ENCODE measurements at regions of chr5 and their contacts with region 1.

Region 1: DNA sequence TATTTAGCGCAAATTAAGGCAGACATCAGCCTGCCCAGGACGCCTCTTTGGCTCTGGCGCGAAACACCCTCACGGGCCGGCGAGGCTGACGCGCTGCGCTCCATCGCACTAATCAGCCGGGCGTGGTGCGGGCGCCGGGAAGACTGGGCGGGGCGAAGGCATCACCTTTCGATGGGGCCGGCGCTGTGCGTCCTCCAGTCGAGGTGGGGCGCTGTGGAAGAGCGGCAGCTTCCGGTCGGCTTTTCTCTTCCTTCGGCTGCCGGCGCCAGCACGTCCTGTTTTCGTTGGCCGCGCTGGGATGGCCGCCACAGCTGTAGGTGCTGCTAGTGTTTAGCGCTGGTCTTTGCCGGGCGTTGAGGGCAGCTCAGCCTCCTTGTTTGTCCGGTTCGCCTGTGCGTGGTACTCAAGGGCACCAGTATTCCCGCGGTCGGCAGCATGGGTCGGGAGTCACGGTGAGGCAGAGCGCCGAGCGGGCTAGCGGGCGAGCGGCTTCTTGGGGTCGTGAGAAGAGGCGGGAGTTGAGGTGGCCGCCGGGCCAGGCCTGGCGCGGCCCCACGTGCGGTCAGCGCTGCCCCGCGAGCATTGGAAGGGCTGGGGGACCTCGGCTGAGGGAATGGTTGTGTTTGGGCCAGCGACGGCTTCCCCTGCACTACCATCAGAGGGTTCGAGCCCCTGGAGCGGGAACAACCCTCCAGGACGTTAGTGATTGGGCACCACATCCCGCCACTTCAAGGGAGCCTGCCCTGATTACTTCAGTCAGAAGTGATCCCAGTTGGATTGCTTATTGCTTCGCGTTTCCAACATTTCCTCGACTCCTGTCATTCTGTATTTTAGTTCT is at the start of gene DDX46:
- DNase-seq: peak; percentile 97
- H3K4me3 ChIP-seq: peak within 1 kb of the TSS; percentile 79 to 98
- H3K27ac ChIP-seq: peak within 1 kb of the TSS; percentile 72 to 76
- H3K4me1 ChIP-seq: peaks cover 6 to 9% of the 10 kb centered on the region in 2 experiments; a peak in 3 of 4 replicates
- H3K27me3 ChIP-seq: no peaks in the 10 kb centered on the region
- CTCF ChIP-seq: peak; percentile 76
- EP300 ChIP-seq: no peak
- RAD21 ChIP-seq: no peak
- polyA plus RNA-seq, gene DDX46: 20.3 and 22.6 TPM in 2 replicates

Region 2: GRCh38 chr5:134555890-134556311 is 202.8 kb before region 1 on chr5:
- CTCF ChIA-PET with region 1: no interaction called
- POLR2A ChIA-PET with region 1: no interaction called
- DNase-seq: peak; percentile 90
- H3K4me3 ChIP-seq: no peak overlapping the region
- H3K27ac ChIP-seq: peak overlapping the region; percentile 89 to 98
- H3K4me1 ChIP-seq: peaks cover 51 to 60% of the 10 kb centered on the region in 2 experiments
- H3K27me3 ChIP-seq: no peaks in the 10 kb centered on the region
- CTCF ChIP-seq: peak; percentile 17; the same call in 1 of the 2 replicates
- EP300 ChIP-seq: peak in 1 of 2 experiments; percentile 54; a peak in 2 of 4 replicates
- RAD21 ChIP-seq: no peak; the same call in 1 of the 2 replicates

Region 3: DNA sequence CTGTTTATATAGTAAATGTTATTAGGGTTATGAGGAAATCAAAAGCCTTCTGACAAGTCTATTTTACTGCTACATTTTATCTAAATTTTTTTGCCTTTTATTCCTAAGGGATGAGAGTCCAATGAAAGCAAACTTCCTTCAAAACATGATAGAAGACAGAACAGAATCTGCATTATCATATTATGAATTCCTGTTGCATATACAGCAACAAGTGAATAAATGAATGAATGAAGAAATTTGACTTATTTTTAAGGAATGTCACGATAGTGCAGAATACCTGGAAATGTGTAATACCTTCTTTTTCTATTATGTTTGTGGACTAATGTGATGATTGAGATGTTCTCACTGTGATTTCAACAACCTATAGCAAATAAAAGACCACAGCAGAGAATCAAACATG is 33.9 kb before region 1 on chr5:
- CTCF ChIA-PET with region 1: no interaction called
- POLR2A ChIA-PET with region 1: no interaction called
- DNase-seq: no peak
- H3K4me3 ChIP-seq: no peak overlapping the region
- H3K27ac ChIP-seq: no peak overlapping the region
- H3K4me1 ChIP-seq: no peaks in the 10 kb centered on the region
- H3K27me3 ChIP-seq: no peaks in the 10 kb centered on the region
- CTCF ChIP-seq: no peak
- EP300 ChIP-seq: no peak
- RAD21 ChIP-seq: no peak

Region 4: GRCh38 chr5:134738133-134738962 is 20.4 kb before region 1 on chr5 and contains the start of gene CAMLG:
- CTCF ChIA-PET with region 1: interaction called, 16 read pairs
- POLR2A ChIA-PET with region 1: interaction called, 11 read pairs
- DNase-seq: peak; percentile 94
- H3K4me3 ChIP-seq: peak within 1 kb of the TSS; percentile 76 to 84
- H3K27ac ChIP-seq: peak within 1 kb of the TSS; percentile 82 to 90
- H3K4me1 ChIP-seq: peaks cover 0 to 12% of the 10 kb centered on the region in 2 experiments; a peak in 2 of 4 replicates
- H3K27me3 ChIP-seq: no peaks in the 10 kb centered on the region
- CTCF ChIP-seq: peak; percentile 67
- EP300 ChIP-seq: no peak
- RAD21 ChIP-seq: peak; percentile 44; the same call in 1 of the 2 replicates
- polyA plus RNA-seq, gene CAMLG: 11.9 and 16.9 TPM in 2 replicates

Region 5: DNA sequence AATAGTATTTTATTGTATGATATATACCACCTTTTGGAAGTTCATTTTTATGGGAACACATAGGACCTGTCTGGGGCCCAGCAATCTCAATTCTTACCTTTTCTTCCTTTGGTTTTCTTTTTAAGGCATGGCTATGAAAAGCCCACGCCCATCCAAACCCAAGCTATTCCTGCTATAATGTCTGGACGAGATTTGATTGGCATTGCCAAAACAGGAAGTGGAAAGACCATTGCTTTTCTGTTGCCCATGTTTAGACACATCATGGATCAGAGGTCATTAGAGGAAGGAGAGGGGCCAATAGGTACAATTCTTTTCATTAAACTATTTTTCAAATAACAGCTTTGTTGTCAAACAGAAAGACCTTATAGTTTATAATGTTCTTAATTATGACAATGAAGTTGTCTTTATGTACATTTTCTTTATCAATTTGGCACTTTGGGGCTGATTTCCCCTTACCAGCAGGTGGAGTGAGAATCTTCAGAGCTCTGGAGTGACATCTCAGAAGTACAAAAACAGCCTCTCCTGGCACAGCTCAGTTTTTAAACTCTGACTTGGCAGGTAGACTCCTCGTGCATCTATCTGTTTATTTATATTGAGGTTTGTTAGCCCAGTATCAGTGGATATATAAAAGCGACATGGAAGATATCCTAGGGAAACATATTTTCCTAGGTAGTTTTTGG is 25.7 kb after region 1 on chr5:
- CTCF ChIA-PET with region 1: interaction called, 10 read pairs
- POLR2A ChIA-PET with region 1: no interaction called
- DNase-seq: no peak
- H3K4me3 ChIP-seq: no peak overlapping the region
- H3K27ac ChIP-seq: peak overlapping the region in 1 of 2 experiments; percentile 17; a peak in 2 of 4 replicates
- H3K4me1 ChIP-seq: no peaks in the 10 kb centered on the region
- H3K27me3 ChIP-seq: no peaks in the 10 kb centered on the region
- CTCF ChIP-seq: peak; percentile 45
- EP300 ChIP-seq: no peak
- RAD21 ChIP-seq: no peak

Region 6: GRCh38 chr5:134851307-134851923 is 92.7 kb after region 1 on chr5:
- CTCF ChIA-PET with region 1: no interaction called
- POLR2A ChIA-PET with region 1: no interaction called
- DNase-seq: peak; percentile 40
- H3K4me3 ChIP-seq: no peak overlapping the region
- H3K27ac ChIP-seq: peak overlapping the region; percentile 3 to 42; a peak in 2 of 4 replicates
- H3K4me1 ChIP-seq: peaks cover 6 to 24% of the 10 kb centered on the region in 2 experiments
- H3K27me3 ChIP-seq: no peaks in the 10 kb centered on the region
- CTCF ChIP-seq: peak; percentile 67
- EP300 ChIP-seq: no peak
- RAD21 ChIP-seq: peak; percentile 48

Measured in SK-N-SH (cell line).